AG04449 (cell line): ENCODE measurements at regions of chr5 and their contacts with region 1.

Region 1: DNA sequence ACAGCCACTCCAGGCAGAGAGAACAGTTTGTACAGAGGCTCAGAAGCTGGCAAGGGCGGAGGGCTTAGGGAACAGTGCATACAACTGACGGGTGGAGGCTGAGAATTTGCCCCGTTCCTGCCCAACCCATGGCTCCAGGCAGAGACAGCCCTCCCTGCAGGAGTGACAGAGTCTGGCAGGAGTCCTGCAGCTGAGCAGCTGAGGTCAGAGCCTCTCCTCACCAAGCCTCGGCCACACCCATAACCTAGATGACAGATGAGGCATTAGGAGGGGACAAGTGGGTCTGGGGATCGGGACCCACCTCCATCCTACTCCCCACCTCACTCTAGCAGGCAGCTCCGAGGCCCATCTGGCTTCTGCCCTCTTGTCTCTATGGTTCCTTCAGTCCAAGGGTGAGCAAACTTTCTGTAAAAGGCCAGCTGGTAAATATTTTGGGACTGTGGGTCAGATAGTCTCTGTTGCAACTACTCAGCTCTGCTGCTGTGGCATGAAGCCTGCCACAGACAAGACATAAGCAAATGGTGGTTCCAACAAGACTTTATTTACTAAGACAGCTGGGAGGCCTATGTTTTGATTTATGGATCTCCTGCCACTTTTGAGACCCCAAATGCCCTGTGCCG is 83.6 kb downstream of the SH3TC2 start:
- DNase-seq: no peak
- H3K4me3 ChIP-seq: no peak overlapping the region
- CTCF ChIP-seq: no peak

Region 2: GRCh38 chr5:148949841-148950470 is 29.3 kb before region 1 on chr5:
- CTCF ChIA-PET with region 1: no interaction called
- POLR2A ChIA-PET with region 1: no interaction called
- DNase-seq: no peak
- H3K4me3 ChIP-seq: no peak overlapping the region
- CTCF ChIP-seq: no peak

Region 3: DNA sequence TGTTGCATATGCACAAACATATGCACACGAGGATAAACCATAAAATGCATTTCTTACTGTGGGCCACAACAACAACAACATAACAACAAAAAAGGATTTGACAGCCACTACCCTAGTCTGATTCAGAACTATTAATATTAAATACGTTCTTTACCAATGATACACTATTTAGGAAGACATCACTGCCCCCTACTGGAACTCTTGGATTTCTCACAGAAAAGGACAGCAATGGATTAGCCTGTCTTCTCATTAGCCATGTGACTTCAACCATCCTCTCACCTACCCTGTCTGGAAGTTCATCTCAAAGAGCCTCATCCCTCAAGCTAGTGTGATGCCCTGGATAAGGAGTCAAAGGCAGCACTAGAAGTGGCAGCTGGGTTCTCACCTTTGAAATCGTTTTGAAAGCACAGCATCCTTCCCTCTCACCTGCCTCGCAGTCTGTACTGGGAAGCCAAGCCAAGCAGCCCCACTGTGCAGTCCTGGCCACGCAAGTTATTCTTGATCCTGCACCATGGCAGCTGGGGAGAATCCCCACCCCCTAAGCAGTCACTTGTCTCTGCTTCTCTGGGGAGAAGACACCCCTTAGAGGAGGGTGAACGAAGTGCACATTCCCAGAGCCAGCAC is 19.1 kb after region 1 on chr5:
- CTCF ChIA-PET with region 1: interaction called, 10 read pairs
- POLR2A ChIA-PET with region 1: interaction called, 3 read pairs
- DNase-seq: no peak
- H3K4me3 ChIP-seq: no peak overlapping the region
- CTCF ChIP-seq: peak; percentile 57